ENCODE measurements at regions of chr1 and their contacts with region 1.

Region 1: GRCh38 chr1:15272009-15272788 is 25.2 kb downstream of the FHAD1 start:
- DNase-seq: no peak

Region 2: DNA sequence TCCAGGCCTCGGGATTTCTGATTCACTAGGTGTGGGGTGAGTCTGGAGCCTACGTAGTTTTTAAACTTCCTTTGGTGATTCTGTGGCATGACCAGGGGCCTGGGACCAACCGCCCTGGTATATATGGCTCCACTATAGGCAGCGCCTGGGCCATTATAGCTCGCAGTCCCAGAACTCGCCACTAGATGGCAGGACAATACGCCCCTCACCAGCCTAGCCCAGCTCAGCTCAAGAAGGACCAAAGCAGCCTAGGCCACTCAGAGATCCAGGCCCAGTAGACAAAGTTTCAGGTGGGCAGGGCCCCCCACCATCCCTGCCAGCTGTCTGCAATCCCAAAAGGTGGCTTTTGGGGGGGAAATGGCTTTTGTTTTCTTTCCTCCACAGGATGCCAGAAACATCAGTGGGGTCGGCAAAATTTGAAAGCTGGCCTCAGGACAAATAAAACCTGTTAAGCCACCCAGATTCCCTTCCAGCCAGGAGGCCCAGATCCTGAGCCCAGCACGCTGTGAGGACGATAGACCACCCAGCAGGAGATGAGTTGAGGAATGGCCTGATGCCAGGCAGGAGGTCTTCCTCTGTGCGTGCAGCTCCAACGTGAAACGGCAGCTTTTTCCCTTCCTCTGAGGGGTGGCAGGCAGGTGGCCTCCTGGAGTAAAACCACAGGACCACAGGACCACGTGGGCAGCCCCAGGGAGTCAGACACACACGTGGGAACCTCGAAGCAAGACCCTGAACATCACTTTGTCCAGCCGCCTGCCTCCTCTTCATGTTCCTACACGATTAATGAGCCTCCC is 143.5 kb before region 1 on chr1:
- intact Hi-C with region 1: loop called in 1 of 2 experiments (anchors 5 kb)
- DNase-seq: peak; percentile 87

Region 3: GRCh38 chr1:15141935-15142539 is 130.2 kb before region 1 on chr1:
- intact Hi-C with region 1: loop called in 1 of 2 experiments (anchors 10 kb)
- DNase-seq: no peak

Region 4: DNA sequence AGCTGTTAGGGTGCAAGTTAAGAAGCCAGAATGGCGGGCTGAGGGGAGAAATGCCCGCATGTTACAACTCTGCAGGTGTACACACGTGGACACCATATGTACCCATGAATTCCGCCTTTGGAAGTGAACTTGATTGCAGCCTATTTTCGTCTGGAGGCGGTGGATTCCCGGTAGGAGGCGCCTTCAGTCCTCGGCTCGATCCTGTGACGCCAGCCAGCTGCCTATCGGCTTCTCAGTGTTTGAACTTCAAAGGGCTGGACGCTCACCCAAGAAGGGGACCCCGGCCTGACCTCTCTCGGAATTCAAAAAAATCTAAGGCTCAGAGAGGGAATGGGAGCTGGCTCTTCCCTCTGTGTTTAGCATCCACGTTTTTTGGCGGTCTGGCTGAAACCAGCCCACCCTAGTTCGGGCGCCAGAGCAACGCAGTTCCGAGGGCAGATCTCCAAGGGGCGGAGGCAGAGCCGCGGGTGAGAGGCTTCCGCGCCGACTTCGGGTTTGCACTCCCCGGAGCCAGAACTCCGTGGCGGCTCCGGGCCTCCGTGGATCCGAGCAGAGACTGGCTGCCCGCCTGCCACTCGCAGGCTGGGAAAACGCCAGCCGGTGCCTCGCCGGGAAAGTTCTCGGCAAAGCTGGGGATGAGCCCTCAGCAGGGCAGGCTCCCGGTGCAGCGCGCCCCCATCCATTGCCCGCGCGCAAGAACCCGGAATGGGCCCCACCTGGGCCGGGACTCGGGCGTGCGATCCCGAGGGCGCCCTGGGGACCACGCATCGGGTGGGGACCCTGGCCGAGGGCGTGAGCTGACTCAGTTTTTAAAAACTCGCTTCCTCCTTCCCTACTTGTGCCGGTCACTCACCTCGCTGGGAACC is 119.6 kb before region 1 on chr1:
- intact Hi-C with region 1: loop called (anchors 5 to 10 kb)
- DNase-seq: peak; percentile 93

Region 5: GRCh38 chr1:15188130-15188524 is 84.1 kb before region 1 on chr1:
- intact Hi-C with region 1: no loop called
- DNase-seq: no peak

Measured in posterior vena cava (tissue), 2 donors.